ENCODE measurements at regions of chr2 and their contacts with region 1.

Region 1: GRCh38 chr2:43637030-43637803 is at the start of gene PLEKHH2:
- DNase-seq: peak; percentile 92
- H3K4me3 Mint-ChIP-seq: peak within 1 kb of the TSS; percentile 79
- H3K27ac Mint-ChIP-seq: no peak within 1 kb of the TSS
- H3K4me1 Mint-ChIP-seq: peaks cover 5% of the 10 kb centered on the region
- H3K27me3 Mint-ChIP-seq: peaks cover 19% of the 10 kb centered on the region
- total RNA-seq, gene PLEKHH2: 0.64 to 0.72 TPM

Region 2: DNA sequence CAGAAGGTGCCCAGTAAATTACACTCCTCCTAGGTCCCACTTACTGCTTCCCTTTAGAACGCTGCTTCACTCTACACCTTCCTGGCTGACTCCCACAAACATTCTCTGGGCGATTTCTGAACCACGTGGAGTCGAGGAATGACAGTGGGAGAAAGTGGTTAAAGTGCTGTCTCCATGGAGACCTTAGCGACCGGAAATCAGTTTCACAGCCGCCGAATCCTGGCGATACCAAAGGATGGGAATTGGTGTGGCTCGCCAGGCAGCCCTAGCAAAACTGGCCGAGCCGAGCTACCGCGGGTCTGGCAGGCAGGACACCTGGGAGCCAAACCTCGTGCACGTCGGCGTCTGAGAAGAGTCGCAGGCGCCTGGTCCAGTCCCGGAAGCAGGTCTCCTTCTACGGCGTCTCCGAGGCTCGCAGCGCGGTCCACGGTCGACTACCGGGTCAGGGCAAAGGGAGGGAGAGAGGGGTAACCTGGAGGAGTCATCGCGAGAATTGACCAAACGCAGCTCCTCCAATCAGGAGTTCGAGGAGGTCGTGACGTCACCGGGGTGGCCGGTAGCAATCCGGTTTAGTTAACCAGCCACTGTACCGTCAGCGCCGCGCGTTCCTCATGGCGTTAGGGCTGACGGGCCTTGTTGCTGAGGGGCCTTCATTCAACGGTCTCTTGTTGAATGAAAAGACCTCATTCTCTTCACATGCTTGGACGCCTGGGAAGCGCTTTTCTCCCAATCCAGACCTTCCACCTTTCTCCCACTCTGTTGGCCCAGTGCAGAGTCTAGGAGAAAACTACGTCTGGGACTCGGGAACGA is 41.4 kb before region 1 on chr2 and contains the start of gene THADA:
- CTCF ChIA-PET with region 1: interaction called, 4 read pairs
- intact Hi-C with region 1: loop called (anchors 1 kb)
- DNase-seq: peak; percentile 99
- H3K4me3 Mint-ChIP-seq: peak within 1 kb of the TSS; percentile 94
- H3K27ac Mint-ChIP-seq: peak within 1 kb of the TSS; percentile 96
- H3K4me1 Mint-ChIP-seq: peaks cover 31% of the 10 kb centered on the region
- H3K27me3 Mint-ChIP-seq: no peaks in the 10 kb centered on the region
- total RNA-seq, gene THADA: 28.6 to 31.5 TPM

Region 3: GRCh38 chr2:43714164-43714563 is 76.9 kb after region 1 on chr2:
- CTCF ChIA-PET with region 1: no interaction called
- intact Hi-C with region 1: no loop called
- DNase-seq: no peak
- H3K4me3 Mint-ChIP-seq: no peak overlapping the region
- H3K27ac Mint-ChIP-seq: no peak overlapping the region
- H3K4me1 Mint-ChIP-seq: no peaks in the 10 kb centered on the region
- H3K27me3 Mint-ChIP-seq: peaks cover 3% of the 10 kb centered on the region

Region 4: DNA sequence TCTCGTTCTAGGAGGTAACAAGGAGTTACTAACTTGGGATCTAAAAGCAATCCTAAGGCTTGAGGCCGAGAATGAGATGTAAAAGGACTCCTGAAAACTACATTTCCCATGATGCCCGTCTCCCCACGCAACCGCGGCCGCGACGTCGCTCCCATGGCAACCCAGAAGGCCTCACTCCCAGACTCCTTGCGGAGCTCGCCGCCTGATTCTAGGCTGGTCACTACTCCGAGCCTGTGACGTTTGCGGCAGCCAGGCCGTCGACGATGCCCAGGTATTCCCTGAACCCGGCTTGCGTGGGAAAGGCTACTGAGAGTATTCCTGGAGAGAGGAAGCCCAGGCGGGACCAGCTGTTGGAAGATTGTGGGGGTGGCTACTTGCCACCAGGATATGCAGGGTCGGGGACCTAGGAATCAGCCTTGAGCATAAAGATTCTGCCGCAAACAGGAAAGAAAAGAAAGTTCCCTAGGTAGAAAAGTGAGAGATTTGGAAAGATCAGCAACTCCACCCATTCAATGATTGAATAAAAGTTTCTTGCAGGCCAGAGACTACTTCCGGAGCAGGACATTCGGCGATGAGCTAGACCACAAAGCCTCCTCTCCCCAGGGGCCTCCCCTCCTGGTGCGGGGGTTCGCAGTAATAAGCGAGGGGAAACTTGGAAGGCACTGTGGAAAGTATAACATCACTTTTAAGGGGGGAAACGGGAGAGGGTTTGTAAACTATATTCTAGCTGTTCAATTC is 136.8 kb after region 1 on chr2 and contains the start of gene DYNC2LI1:
- CTCF ChIA-PET with region 1: interaction called, 3 read pairs
- intact Hi-C with region 1: loop called (anchors 5 kb)
- DNase-seq: peak; percentile 90
- H3K4me3 Mint-ChIP-seq: peak within 1 kb of the TSS; percentile 91
- H3K27ac Mint-ChIP-seq: peak within 1 kb of the TSS; percentile 79
- H3K4me1 Mint-ChIP-seq: peaks cover 21% of the 10 kb centered on the region
- H3K27me3 Mint-ChIP-seq: no peaks in the 10 kb centered on the region
- total RNA-seq, gene DYNC2LI1: 8.0 to 8.9 TPM

Measured in activated naive CD4-positive, alpha-beta T cell treated with anti-CD3 and anti-CD28 coated beads for 36 hours (primary cell).